ENCODE measurements at regions of chr16 and their contacts with region 1.

Region 1: DNA sequence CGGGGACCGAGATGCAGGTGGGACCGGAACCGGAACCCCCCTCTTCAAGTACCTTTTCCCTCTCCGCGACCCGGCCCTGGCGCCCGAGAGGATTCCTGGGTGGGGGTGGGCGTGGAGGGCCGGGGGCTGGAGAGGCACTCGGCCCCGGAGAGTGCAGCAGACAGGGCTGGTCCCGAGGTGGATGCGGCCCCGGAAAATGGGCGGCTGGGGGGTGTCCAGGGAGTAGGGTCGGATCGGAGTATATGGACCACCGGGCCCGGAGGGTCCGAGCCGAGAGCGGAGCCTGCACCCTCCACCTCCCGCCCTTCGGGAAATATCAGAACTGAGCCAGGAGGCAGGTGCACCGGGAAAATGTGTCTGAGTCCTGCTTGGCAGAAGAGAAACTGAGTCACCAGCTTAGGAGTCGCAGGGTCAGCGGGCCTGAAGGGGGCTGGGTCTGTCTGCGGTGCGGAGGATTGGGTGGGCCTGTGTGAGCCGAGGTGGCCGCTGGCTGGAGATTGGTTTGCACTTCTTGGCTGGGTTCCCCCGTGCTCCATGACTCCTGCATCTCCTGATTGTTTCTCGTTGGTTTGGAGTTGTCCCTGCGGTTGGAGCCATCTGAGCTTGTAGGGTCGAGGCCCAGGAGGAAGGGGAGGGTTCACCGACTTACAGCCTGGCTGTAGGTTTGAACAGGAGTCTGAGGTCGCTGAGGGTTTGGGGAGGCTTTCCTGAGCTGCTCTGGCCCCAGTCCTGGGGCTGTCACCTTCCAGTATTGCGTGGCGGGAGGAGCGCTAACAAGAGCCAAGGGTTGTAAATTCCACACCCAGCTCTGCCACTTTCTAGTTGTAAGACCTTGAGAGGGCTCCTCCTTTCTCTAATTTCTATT is 518 bp downstream of the SH2B1 start:
- DNase-seq: peak in 1 of 2 donors; percentile 64
- ATAC-seq: peak; percentile 33
- H3K4me3 ChIP-seq: peak overlapping the region; percentile 66 to 78
- H3K27ac ChIP-seq: peak overlapping the region in 1 of 2 donors; percentile 89
- H3K4me1 ChIP-seq: no peaks in the 10 kb centered on the region
- H3K27me3 ChIP-seq: no peaks in the 10 kb centered on the region

Region 2: DNA sequence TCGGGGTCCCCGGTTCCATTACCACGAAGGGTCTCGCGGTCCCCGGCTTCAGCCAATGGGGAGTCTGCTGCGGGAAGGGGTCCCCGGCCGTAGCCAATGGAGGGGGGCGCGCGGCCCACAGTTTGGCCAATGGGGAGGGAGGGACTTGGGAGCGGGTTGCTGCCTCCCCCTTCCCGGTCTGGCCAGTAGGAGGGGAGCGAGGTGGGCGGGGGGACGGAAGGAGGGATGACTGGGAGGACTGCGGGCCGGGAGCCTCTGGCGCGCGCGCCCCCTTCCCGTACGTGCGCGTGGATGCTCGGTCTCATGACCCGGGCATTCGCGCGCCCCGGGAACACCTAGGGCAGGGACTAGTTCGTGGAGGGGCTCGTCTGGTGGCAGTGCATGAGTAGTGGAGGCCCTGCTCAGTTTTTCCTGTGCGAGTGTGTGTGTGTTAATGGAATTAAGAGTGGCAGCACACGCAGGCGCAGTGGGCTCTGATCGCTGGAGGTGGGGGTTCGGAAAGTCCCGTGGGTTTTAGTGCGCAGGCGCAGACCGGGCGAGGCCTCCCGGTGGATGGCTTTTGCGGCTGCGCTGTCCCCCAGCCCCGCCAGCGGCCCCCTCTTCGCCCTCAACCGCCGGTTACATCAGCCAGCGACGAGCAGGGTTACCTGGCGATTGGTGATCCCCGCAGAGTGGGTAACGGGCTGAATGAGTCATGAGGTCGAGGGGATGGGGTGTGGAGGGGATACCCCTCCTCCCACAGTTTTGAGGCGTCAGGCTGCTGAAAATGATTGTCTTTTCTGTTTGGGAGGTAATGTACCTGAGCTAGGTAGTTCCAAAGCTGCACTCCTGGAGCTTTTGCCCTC is 40.1 kb before region 1 on chr16:
- intact Hi-C with region 1: loop called (anchors 5 kb)
- DNase-seq: peak; percentile 99
- ATAC-seq: peak; percentile 96
- H3K4me3 ChIP-seq: peak overlapping the region; percentile 81 to 98
- H3K27ac ChIP-seq: peak overlapping the region; percentile 96
- H3K4me1 ChIP-seq: no peaks in the 10 kb centered on the region
- H3K27me3 ChIP-seq: no peaks in the 10 kb centered on the region

Region 3: DNA sequence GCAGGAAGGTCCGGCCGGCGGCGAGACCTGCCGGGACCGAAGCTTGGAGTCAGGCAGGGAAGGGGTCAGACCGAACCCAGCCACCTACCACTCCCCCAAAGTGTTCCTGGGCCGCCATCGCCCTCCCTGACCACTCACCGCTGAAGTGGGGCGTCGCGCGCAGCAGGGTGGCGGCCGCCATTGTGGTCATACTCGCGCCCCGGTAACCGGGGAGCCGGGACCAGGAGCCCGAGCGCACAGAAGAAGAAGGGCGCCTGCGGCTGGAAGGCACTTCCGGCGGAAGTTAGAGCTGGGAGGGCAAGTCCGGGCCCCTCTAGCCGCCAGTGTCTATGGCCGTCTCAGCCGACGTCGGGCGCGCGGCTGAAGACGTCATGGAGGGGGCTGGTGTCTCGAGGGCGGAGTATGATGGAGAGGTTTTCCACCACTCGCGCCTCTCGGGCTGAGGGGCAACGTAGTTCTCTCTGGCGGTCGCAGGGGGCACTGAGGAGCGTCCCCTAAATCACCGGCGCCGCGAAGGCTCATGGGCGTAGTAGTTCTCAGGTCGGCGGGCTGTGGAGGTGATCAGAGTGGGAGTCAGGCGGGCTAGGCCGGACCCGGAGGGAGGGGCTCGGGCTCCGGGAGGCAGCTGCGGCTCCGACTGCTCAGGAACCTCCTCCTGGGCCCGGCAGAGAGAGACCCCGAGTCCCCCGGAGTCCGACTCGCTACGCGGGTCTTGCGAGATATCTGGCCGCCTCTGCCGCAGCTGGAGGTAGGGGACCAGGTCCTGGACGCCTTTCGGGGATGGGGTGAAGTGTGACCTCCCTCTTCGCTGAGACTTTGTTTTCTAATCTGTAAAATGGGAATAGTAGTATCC is 17.9 kb before region 1 on chr16 and contains the start of gene TUFM:
- intact Hi-C with region 1: loop called in 1 of 2 experiments (anchors 1 kb)
- DNase-seq: peak; percentile 99 to 100
- ATAC-seq: peak; percentile 98
- H3K4me3 ChIP-seq: peak within 1 kb of the TSS; percentile 56 to 63
- H3K27ac ChIP-seq: peak within 1 kb of the TSS in 1 of 2 donors; percentile 71
- H3K4me1 ChIP-seq: no peaks in the 10 kb centered on the region
- H3K27me3 ChIP-seq: no peaks in the 10 kb centered on the region
- total RNA-seq, gene TUFM: 71.2 to 71.5 TPM

Region 4: GRCh38 chr16:28924732-28925385 is 60.7 kb after region 1 on chr16 and contains the start of gene RABEP2:
- intact Hi-C with region 1: loop called in 1 of 2 experiments (anchors 5 kb)
- DNase-seq: peak; percentile 95 to 98
- ATAC-seq: peak; percentile 98
- H3K4me3 ChIP-seq: peak within 1 kb of the TSS; percentile 88 to 94
- H3K27ac ChIP-seq: peak within 1 kb of the TSS; percentile 78 to 97
- H3K4me1 ChIP-seq: no peaks in the 10 kb centered on the region
- H3K27me3 ChIP-seq: no peaks in the 10 kb centered on the region
- total RNA-seq, gene RABEP2: 11.5 to 18.8 TPM

Region 5: DNA sequence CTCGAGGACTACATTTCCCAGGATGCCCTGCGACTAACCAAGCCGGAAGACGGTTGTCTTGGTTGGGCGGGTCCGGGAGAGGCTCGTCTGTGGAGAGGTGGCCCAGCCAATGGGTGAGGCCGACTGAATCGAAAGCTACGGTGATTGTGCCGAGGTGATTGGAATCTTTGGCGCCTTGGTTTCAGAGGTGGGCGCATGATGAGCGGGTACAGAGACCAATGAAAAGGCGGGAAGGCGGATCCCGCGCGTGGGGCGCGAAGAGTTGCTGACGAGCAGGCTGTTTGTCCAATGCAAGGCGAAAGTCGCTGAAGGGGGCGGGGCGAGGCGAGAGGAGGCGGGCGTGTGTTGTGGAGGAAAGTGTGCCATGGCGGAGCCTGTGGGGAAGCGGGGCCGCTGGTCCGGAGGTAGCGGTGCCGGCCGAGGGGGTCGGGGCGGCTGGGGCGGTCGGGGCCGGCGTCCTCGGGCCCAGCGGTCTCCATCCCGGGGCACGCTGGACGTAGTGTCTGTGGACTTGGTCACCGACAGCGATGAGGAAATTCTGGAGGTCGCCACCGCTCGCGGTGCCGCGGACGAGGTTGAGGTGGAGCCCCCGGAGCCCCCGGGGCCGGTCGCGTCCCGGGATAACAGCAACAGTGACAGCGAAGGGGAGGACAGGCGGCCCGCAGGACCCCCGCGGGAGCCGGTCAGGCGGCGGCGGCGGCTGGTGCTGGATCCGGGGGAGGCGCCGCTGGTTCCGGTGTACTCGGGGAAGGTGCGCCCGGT is 86.7 kb after region 1 on chr16 and contains the start of gene NFATC2IP:
- intact Hi-C with region 1: loop called in 1 of 2 experiments (anchors 5 kb)
- DNase-seq: peak; percentile 100
- ATAC-seq: peak; percentile 99
- H3K4me3 ChIP-seq: peak within 1 kb of the TSS; percentile 80 to 89
- H3K27ac ChIP-seq: peak within 1 kb of the TSS; percentile 32 to 38
- H3K4me1 ChIP-seq: peaks cover 0 to 1% of the 10 kb centered on the region in 2 donors
- H3K27me3 ChIP-seq: no peaks in the 10 kb centered on the region
- total RNA-seq, gene NFATC2IP: 21.5 to 38.5 TPM

Region 6: DNA sequence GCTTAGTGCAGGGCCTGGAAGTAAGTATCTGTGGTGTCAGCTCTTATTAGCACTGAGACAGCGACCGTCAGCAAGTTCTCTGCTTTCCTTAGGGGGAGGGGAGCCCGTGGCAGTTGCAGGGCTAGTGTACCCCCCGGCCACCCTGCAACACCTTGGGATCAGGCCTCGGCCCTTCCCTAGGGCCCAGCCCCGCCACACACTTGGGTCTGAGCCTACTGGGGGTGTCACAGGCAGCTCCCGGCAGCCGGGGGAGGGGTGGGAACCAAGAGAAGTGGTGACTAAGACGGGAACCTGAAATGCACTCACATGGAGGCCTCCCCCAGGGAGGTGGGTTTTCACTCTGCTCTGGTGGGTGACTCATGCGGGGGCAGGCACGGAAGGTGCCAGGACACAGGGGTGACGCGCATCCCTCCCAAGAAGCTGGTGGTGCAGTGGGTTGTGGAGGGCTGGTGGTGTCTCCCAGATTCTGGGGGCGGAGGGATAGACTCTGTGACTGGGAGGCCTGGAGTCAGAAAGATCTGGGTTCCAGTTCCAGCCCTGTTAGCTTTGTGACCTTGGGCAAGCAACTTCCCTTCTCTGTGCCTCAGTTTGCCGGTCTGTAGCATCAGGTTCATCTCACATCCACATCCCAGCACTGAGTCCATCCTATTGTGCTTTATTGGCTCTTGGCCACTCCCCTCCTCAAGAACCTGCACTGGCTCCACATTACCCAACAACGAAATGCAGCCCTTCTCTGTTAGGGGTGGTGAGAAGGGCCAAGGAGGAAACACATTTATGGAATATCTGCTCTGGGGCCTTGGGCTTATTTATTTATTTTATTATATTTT is 165.2 kb after region 1 on chr16:
- intact Hi-C with region 1: no loop called
- DNase-seq: peak in 1 of 2 donors; percentile 78
- ATAC-seq: no peak
- H3K4me3 ChIP-seq: no peak overlapping the region
- H3K27ac ChIP-seq: no peak overlapping the region
- H3K4me1 ChIP-seq: no peaks in the 10 kb centered on the region
- H3K27me3 ChIP-seq: no peaks in the 10 kb centered on the region

Region 7: DNA sequence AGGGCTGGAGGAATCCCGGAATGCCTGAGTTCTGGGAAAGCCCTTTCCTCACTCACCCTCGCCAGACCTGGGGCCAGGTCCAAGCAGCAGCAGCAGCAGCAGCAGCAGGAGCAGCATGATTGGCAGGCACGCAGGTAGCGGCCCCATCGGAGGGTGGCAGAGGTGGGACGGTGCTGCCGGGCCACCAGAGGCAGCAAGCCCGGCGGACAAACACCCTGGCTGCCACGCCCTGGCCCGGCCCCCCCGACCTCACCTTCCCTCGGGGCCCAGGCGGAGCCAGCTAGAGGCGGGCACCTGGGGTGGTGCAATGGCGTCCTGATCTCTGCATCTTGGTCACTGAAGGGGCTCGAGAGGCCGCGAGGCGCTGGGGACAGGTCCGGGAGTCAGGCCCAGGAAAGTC is 243.1 kb after region 1 on chr16:
- intact Hi-C with region 1: no loop called
- DNase-seq: no peak
- ATAC-seq: peak; percentile 46
- H3K4me3 ChIP-seq: no peak overlapping the region
- H3K27ac ChIP-seq: no peak overlapping the region
- H3K4me1 ChIP-seq: no peaks in the 10 kb centered on the region
- H3K27me3 ChIP-seq: no peaks in the 10 kb centered on the region